Activated naive CD4-positive, alpha-beta T cell treated with anti-CD3 and anti-CD28 coated beads for 36 hours (primary cell): ENCODE measurements at regions of chr3 and their contacts with region 1.

Region 1: DNA sequence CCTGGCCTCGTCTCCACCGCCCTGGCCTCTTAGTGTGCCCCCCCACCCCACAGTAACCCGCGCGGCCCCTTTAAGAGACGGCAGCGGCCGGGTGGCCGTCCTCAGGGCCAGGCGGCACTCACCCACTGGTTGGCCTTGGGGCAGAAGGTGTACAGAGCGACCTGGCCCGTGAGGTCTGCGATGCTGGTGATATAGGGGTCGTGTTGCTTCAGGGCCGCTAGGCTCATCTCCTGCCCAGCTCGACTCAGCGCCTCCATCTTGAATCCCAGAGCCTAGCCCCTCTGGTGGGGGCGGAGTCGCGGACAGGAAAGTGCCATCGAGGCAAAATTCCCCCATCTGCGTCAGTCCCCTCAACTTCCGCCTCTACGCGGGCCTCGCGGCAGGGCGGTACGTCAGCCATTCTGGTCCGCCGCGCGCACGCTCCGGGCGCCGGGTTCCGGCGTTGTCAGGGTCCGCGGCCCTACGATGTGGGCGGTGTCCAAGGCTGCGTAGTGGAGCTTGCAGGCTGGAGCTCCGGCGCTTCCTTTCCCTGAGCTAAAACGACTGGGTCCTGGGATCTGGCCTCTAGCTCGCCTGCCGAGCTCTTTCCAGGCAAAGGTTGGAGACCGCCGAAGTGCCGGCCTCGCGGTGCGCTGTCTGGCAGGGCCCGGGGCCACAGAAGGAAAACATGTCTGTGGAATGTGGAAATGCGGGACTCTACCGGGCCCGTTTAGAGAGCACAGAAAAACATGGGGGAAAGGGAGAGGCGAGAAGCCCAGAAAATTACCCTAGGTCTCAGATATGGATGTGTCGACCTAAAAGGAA is at the start of gene DCP1A:
- DNase-seq: peak; percentile 97
- H3K4me3 Mint-ChIP-seq: peak within 1 kb of the TSS; percentile 96
- H3K27ac Mint-ChIP-seq: peak within 1 kb of the TSS; percentile 88
- H3K4me1 Mint-ChIP-seq: peaks cover 25% of the 10 kb centered on the region
- H3K27me3 Mint-ChIP-seq: no peaks in the 10 kb centered on the region
- total RNA-seq, gene DCP1A: 23.8 to 25.0 TPM

Region 2: DNA sequence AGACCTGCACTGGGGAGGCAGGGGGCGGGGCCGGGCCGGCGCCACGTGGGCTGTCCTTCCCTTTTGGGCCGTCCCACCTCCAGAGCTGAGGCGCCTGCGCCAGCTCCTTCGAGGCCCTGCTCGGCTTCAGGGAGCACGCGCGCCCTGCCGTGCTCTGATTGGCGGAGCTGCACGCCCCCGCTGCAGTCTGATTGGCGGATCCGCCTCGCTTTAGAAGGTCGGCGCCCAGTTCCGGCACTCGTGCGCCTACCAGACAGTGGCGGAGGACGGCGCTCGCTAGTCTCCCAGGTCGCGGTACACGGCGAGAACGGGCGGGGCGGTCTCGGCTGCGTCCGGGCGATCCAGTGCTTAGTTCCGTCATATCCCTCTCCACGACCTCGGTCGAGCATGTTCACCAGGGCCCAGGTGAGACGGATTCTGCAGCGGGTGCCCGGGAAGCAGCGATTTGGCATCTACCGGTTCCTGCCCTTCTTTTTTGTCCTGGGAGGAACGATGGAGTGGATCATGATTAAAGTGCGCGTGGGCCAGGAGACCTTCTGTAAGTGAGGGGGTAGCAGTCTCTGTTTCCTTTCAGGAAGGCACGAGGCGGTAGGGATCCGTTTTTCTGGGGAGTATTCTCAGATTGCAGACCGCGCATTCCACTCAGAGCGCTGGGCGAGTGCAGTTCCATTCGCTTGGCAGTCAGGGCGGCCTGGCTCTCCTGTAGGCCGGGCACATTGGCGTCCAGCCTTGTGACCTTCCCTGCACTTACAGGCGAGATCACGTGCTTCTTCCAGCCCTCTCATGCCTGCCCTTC is 810.9 kb before region 1 on chr3 and contains the start of gene UQCC5:
- CTCF ChIA-PET with region 1: no interaction called
- intact Hi-C with region 1: loop called (anchors 10 kb)
- DNase-seq: peak; percentile 98
- H3K4me3 Mint-ChIP-seq: peak within 1 kb of the TSS; percentile 91
- H3K27ac Mint-ChIP-seq: peak within 1 kb of the TSS; percentile 87
- H3K4me1 Mint-ChIP-seq: peaks cover 49% of the 10 kb centered on the region
- H3K27me3 Mint-ChIP-seq: no peaks in the 10 kb centered on the region
- total RNA-seq, gene UQCC5: 12.3 to 13.1 TPM

Region 3: DNA sequence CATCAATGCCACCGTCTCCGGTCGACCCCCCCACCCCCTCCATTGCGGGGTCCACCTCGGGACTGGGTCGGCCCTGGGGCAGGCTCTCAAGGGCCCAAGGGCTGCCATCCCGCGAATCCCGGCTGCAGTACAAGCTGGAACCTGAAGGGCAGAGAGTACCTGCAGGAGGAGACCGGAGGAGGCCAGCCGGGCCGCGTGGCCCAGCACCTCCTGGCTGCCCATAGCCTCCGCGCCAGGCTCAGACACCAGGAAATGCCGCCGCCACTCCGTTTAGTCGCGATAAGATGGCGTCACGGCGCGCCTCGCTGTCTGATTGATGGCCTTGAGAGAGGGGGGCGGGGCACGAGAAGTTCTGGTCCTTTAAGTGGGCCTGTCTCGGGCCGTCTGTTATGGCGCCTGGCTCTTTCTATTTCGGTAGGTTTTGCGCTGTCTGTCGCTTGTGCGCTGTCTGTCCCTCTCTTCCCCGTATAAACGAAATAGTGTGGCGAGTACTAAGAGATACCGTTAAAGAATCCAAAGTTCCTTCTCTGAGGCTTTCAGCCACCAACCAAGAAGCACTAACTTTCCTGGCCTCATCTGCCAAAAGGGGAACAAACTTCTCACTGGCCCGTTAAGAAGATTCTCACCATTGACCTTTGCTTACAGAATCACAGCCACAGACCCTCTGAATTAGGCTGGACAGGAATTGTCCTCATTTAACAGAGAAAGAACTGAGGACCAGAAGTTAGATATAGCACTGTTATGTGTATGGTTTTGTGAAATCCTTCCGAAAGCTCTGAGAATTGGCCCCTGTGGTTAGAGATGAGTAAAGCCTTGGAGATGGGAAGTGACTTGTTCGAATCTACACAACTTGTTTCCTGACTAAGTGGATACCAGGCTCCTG is 217.0 kb before region 1 on chr3 and contains the start of gene RFT1:
- CTCF ChIA-PET with region 1: no interaction called
- intact Hi-C with region 1: loop called (anchors 1 kb)
- DNase-seq: peak; percentile 99
- H3K4me3 Mint-ChIP-seq: peak within 1 kb of the TSS; percentile 87
- H3K27ac Mint-ChIP-seq: peak within 1 kb of the TSS; percentile 93
- H3K4me1 Mint-ChIP-seq: peaks cover 27% of the 10 kb centered on the region
- H3K27me3 Mint-ChIP-seq: no peaks in the 10 kb centered on the region
- total RNA-seq, gene RFT1: 29.9 to 31.7 TPM

Region 4: DNA sequence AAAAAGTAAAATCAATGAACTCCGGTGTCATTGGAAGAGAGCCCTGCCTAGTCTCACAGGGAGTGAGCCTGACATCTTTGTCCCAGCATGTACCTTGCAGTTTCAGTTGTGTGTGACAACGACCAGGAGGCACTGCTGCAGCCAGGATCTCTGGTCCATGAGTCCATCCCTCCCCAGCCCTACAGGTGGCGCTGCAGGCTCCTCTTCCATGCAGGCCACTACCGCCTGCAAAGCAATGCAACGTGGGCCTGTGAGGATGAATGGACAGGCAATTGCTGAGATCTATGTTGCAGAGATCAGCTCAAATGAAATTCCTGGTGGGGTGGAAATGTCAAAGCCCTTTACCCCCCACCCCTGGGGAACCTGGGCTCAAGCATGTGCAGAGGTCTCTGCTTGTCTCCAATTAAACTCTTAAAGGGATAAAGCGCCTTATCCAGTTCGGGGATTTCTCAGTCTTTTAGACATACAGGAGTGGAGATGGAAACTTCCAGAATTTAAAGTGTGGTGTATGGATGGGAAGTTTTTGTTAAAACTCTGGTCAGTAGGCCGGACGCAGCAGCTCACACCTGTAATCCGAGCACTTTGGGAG is 127.5 kb before region 1 on chr3:
- CTCF ChIA-PET with region 1: no interaction called
- intact Hi-C with region 1: loop called (anchors 1 kb)
- DNase-seq: peak; percentile 91
- H3K4me3 Mint-ChIP-seq: no peak overlapping the region
- H3K27ac Mint-ChIP-seq: no peak overlapping the region
- H3K4me1 Mint-ChIP-seq: peaks cover 1% of the 10 kb centered on the region
- H3K27me3 Mint-ChIP-seq: no peaks in the 10 kb centered on the region

Region 5: DNA sequence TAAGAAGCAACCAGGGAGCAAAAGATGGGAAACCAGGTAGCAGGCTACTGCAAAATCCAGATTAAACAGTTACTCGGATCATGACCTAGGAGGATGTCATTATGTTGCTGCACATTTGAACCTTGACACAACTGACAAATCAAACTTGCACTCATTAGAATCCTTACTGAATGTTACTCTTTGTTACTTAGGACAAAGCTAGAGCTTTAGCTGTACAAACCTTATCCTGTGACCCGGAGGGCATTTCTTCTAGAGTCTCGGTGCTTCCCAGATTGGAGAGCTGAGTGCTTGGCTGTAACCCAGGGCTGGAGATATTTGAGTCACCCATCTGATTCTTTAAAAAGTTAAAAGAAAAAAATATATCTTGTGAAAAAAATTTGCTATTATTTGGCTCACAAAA is 43.5 kb before region 1 on chr3:
- CTCF ChIA-PET with region 1: interaction called, 7 read pairs
- intact Hi-C with region 1: loop called (anchors 1 kb)
- DNase-seq: no peak
- H3K4me3 Mint-ChIP-seq: no peak overlapping the region
- H3K27ac Mint-ChIP-seq: no peak overlapping the region
- H3K4me1 Mint-ChIP-seq: peaks cover 3% of the 10 kb centered on the region
- H3K27me3 Mint-ChIP-seq: no peaks in the 10 kb centered on the region

Region 6: GRCh38 chr3:53891497-53892285 is 544.2 kb after region 1 on chr3 and contains the start of gene SELENOK:
- CTCF ChIA-PET with region 1: interaction called, 6 read pairs
- intact Hi-C with region 1: loop called (anchors 1 kb)
- DNase-seq: peak; percentile 99
- H3K4me3 Mint-ChIP-seq: peak within 1 kb of the TSS; percentile 91
- H3K27ac Mint-ChIP-seq: peak within 1 kb of the TSS; percentile 96
- H3K4me1 Mint-ChIP-seq: peaks cover 47% of the 10 kb centered on the region
- H3K27me3 Mint-ChIP-seq: no peaks in the 10 kb centered on the region
- total RNA-seq, gene SELENOK: 29.6 to 36.1 TPM